Activated CD8-positive, alpha-beta T cell treated with anti-CD3 and anti-CD28 coated beads for 36 hours (primary cell): ENCODE measurements at regions of chr13 and their contacts with region 1.

Region 1: GRCh38 chr13:25037057-25037813 is 58.7 kb upstream of the PABPC3 start:
- DNase-seq: peak; percentile 65
- ATAC-seq: peak; percentile 81
- H3K4me3 Mint-ChIP-seq: no peak overlapping the region
- H3K27ac Mint-ChIP-seq: no peak overlapping the region
- H3K4me1 Mint-ChIP-seq: no peaks in the 10 kb centered on the region
- H3K27me3 Mint-ChIP-seq: peaks cover 30% of the 10 kb centered on the region
- CTCF ChIP-seq: peak; percentile 71

Region 2: DNA sequence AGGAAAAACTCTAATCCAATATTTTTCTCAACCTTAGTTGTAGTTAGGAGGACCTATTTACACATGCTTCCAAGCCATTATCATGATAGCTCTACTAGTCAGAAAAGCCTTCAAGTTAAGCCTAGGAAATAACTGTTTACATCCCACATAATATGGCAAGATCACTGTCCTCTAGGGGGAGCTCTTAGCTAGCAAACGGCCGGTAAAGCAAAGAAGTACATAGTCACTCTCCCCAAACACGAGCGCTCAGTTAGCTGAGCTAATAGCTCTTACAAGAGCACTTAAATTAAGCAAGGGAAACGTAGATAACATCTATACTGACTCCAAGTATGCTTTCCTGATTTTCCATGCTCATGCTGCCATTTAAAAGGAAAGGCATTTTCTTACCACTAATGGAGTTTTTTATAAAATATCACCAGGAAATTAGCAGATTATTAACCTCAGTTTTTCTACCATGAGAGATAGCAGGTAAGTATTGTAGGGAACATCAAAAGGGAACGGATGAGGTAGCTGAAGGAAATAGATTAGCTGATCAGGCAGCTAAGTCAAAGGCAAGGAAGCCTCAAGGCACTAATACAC is 41.9 kb before region 1 on chr13:
- CTCF ChIA-PET with region 1: interaction called, 13 read pairs
- POLR2A ChIA-PET with region 1: no interaction called
- intact Hi-C with region 1: no loop called
- DNase-seq: peak; percentile 76
- ATAC-seq: peak; percentile 83
- H3K4me3 Mint-ChIP-seq: no peak overlapping the region
- H3K27ac Mint-ChIP-seq: no peak overlapping the region
- H3K4me1 Mint-ChIP-seq: peaks cover 3% of the 10 kb centered on the region
- H3K27me3 Mint-ChIP-seq: peaks cover 21% of the 10 kb centered on the region
- CTCF ChIP-seq: peak; percentile 83

Region 3: GRCh38 chr13:25001476-25002206 is 35.6 kb before region 1 on chr13:
- CTCF ChIA-PET with region 1: interaction called, 5 read pairs
- POLR2A ChIA-PET with region 1: no interaction called
- intact Hi-C with region 1: loop called (anchors 2 kb)
- DNase-seq: no peak
- ATAC-seq: no peak
- H3K4me3 Mint-ChIP-seq: no peak overlapping the region
- H3K27ac Mint-ChIP-seq: no peak overlapping the region
- H3K4me1 Mint-ChIP-seq: peaks cover 3% of the 10 kb centered on the region
- H3K27me3 Mint-ChIP-seq: peaks cover 26% of the 10 kb centered on the region
- CTCF ChIP-seq: no peak